A673 (cell line): ENCODE measurements at regions of chr22 and their contacts with region 1.

Region 1: DNA sequence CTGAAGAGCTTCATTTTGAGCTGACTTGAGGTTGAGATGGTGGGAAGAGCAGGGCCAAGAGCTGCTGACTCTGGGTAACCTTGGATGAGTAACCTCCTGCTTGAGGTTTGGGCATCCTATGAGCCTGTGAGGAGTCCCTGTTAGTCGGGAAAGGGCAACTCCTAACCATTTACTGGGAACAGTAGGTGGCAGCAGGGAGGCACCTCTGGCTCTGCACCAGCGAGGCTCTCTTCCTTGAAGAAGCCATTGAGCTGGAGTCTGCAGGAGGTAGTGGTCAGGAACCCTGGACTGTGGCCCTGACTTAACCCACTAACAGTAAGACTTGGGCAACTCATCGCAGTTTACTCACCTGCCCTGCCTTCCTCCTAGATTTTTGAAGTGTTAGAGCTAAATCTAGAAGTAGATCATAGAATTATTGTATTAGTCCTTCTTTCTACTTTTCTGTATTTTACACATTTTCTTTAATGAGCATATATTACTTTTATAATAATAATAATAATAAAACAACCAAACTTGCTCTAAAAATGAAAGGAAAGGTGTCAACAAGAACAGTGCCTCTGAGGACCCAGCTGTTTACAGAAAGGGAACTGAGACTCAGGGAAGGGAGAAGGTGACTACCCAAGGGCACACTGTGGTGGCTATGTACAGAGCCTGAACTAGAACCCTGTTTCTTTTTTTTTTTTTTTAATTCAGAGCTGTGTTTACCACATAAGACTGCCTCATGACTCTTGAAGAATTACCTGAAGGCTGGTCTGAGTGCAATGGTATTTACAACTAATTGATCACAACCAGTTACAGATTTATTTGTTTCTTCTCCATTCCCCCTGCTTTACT is 47.5 kb downstream of the MEI1 start:
- DNase-seq: peak; percentile 79
- H3K4me3 ChIP-seq: no peak overlapping the region
- H3K27ac ChIP-seq: no peak overlapping the region
- H3K4me1 ChIP-seq: no peaks in the 10 kb centered on the region
- H3K27me3 ChIP-seq: no peaks in the 10 kb centered on the region
- CTCF ChIP-seq: peak; percentile 82

Region 2: GRCh38 chr22:41697126-41697775 is 49.5 kb before region 1 on chr22:
- CTCF ChIA-PET with region 1: interaction called, 10 read pairs
- POLR2A ChIA-PET with region 1: no interaction called
- intact Hi-C with region 1: no loop called
- DNase-seq: peak; percentile 92
- H3K4me3 ChIP-seq: peak overlapping the region; percentile 17
- H3K27ac ChIP-seq: peak overlapping the region; percentile 41
- H3K4me1 ChIP-seq: peaks cover 12% of the 10 kb centered on the region
- H3K27me3 ChIP-seq: no peaks in the 10 kb centered on the region
- CTCF ChIP-seq: peak; percentile 100

Region 3: GRCh38 chr22:41857155-41857859 is 110.5 kb after region 1 on chr22:
- CTCF ChIA-PET with region 1: interaction called, 4 read pairs
- POLR2A ChIA-PET with region 1: no interaction called
- intact Hi-C with region 1: loop called (anchors 10 kb)
- DNase-seq: peak; percentile 57
- H3K4me3 ChIP-seq: no peak overlapping the region
- H3K27ac ChIP-seq: peak overlapping the region; percentile 38
- H3K4me1 ChIP-seq: peaks cover 22% of the 10 kb centered on the region
- H3K27me3 ChIP-seq: no peaks in the 10 kb centered on the region
- CTCF ChIP-seq: peak; percentile 61

Region 4: GRCh38 chr22:41940832-41941765 is 194.3 kb after region 1 on chr22:
- CTCF ChIA-PET with region 1: interaction called, 3 read pairs
- POLR2A ChIA-PET with region 1: no interaction called
- intact Hi-C with region 1: loop called (anchors 2 kb)
- DNase-seq: peak; percentile 87
- H3K4me3 ChIP-seq: no peak overlapping the region
- H3K27ac ChIP-seq: peak overlapping the region; percentile 57
- H3K4me1 ChIP-seq: peaks cover 5% of the 10 kb centered on the region
- H3K27me3 ChIP-seq: no peaks in the 10 kb centered on the region
- CTCF ChIP-seq: peak; percentile 85

Region 5: DNA sequence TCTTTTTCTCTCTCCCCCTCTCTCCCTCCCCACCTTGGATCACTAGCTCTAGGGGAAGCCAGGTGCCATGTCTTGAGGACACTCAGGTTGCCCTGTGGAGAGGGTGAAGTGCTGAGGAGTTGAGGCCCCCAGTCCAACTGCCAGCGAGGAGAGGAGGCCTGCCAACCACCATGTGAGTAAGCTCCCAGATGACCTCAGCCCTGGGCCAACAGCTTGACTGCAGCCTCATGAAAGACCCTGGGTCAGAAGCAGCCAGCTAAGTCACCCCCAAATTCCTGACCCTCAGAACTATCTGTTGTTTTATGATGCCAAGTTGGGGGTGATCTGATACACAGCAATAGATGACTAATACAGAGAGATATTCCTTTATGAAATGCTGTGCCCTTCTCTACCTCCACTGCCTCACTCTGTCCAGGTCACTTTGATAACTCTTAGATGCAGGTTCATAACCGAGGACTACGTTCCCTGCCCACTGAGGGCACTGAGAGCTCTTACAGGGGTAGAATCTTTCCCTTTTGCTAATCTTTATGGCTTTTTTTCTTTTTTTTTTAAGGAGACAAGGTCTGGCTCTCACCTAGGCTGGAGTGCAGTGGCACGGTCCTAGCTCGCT is 1102.3 kb after region 1 on chr22:
- CTCF ChIA-PET with region 1: interaction called, 10 read pairs
- POLR2A ChIA-PET with region 1: no interaction called
- intact Hi-C with region 1: no loop called
- DNase-seq: no peak
- H3K4me3 ChIP-seq: no peak overlapping the region
- H3K27ac ChIP-seq: no peak overlapping the region
- H3K4me1 ChIP-seq: no peaks in the 10 kb centered on the region
- H3K27me3 ChIP-seq: no peaks in the 10 kb centered on the region
- CTCF ChIP-seq: no peak